ENCODE measurements at regions of chrX and their contacts with region 1.

Region 1: DNA sequence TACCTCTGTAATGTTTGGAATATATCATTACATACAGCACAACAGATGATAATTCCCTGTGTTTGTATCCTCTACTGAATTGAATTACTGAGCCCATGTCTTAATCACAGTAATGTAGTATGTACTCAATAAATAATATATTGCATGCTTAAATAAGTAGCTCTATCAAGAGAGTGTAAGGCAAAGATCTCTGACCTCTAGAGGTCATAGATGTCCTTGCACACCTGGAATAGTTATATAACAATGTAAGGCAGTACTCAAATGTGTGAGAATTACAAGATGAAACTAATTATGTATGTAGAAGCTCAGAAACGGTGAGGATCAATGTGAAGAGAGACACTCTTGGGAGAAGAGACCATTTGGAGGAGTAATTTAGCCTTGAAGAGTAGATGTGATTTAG is 14.3 kb upstream of the GCNA start:
- DNase-seq: no peak
- ATAC-seq: no peak
- H3K4me3 ChIP-seq: no peak overlapping the region
- H3K27ac ChIP-seq: no peak overlapping the region
- H3K4me1 ChIP-seq: no peaks in the 10 kb centered on the region
- H3K27me3 ChIP-seq: no peaks in the 10 kb centered on the region
- CTCF ChIP-seq: no peak

Region 2: DNA sequence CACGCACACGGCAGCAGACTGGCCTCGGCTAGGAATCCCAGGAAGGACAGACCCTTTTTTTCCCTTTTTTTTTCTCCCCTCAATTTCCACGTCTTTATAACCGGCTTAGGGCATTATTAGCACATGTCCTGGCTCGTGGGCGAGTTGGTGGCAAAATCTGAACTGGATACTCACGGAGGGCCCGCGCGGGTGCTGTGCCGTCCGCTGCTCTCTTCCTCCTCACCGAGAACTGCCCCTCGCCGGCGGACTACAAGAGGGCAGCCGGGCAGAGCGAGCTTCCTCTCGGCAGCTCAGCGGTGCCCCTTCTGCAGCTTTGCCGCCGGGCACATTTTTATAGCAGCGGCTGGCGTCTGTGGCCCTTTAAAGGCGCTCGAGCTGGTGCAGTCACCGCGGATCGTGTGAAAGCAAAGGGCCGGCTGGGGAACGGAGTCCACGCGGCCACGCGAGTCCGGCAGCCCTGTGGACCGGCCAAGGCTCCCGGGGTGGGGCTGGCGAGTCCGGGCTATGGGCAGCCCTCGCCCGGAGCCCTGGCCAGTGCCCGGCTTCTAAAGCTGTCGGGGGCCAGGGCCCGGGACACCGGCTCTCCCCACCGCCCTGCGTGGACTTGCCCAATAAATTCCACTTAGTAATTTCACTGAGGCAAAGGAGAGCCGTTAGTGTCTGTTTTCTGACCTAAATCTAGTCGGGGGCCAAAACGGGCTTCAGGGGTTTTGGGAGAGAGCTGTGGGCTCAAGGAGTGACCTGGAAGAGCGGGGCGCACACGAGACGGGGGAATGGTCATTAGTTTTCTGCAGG is 743.1 kb after region 1 on chrX:
- CTCF ChIA-PET with region 1: interaction called, 14 read pairs
- POLR2A ChIA-PET with region 1: no interaction called
- in situ Hi-C with region 1: no loop called
- intact Hi-C with region 1: no loop called
- DNase-seq: no peak
- ATAC-seq: peak; percentile 82
- H3K4me3 ChIP-seq: peak overlapping the region; percentile 44 to 62
- H3K27ac ChIP-seq: no peak overlapping the region
- H3K4me1 ChIP-seq: peaks cover 4% of the 10 kb centered on the region
- H3K27me3 ChIP-seq: no peaks in the 10 kb centered on the region; the same call in 1 of the 2 replicates
- CTCF ChIP-seq: no peak